Activated CD8-positive, alpha-beta T cell treated with anti-CD3 and anti-CD28 coated beads for 36 hours (primary cell): ENCODE measurements at regions of chr4 and their contacts with region 1.

Region 1: GRCh38 chr4:139950568-139950967 is 203.4 kb downstream of the MAML3 start:
- DNase-seq: peak; percentile 85
- ATAC-seq: peak; percentile 90
- H3K4me3 Mint-ChIP-seq: peak overlapping the region; percentile 23
- H3K27ac Mint-ChIP-seq: peak overlapping the region; percentile 86
- H3K4me1 Mint-ChIP-seq: peaks cover 31% of the 10 kb centered on the region
- H3K27me3 Mint-ChIP-seq: peaks cover 7% of the 10 kb centered on the region
- CTCF ChIP-seq: no peak

Region 2: DNA sequence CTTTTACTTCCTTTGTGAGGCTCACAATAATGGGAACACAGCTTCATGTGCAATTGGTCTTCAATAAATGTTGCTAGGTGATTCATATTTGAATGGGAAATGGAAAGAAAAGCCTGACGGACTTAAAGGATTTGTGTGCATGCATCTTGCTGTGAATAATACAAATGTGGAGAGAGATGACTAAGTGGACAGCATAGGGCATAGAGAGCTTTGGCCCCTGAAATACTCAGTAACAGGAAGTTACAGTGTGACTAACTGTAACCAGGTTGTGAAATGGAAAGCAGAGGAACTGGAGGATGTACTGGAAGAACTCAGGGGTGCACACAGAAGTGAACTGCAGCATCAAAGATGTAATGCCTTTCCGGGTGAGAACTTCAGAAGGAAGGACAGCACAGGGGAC is 78.3 kb before region 1 on chr4:
- CTCF ChIA-PET with region 1: no interaction called
- POLR2A ChIA-PET with region 1: no interaction called
- intact Hi-C with region 1: loop called (anchors 2 kb)
- DNase-seq: no peak
- ATAC-seq: peak; percentile 78
- H3K4me3 Mint-ChIP-seq: no peak overlapping the region
- H3K27ac Mint-ChIP-seq: no peak overlapping the region
- H3K4me1 Mint-ChIP-seq: peaks cover 4% of the 10 kb centered on the region
- H3K27me3 Mint-ChIP-seq: no peaks in the 10 kb centered on the region
- CTCF ChIP-seq: no peak